Left cardiac atrium (tissue), 4 donors: ENCODE measurements at regions of chr11 and their contacts with region 1.

Region 1: DNA sequence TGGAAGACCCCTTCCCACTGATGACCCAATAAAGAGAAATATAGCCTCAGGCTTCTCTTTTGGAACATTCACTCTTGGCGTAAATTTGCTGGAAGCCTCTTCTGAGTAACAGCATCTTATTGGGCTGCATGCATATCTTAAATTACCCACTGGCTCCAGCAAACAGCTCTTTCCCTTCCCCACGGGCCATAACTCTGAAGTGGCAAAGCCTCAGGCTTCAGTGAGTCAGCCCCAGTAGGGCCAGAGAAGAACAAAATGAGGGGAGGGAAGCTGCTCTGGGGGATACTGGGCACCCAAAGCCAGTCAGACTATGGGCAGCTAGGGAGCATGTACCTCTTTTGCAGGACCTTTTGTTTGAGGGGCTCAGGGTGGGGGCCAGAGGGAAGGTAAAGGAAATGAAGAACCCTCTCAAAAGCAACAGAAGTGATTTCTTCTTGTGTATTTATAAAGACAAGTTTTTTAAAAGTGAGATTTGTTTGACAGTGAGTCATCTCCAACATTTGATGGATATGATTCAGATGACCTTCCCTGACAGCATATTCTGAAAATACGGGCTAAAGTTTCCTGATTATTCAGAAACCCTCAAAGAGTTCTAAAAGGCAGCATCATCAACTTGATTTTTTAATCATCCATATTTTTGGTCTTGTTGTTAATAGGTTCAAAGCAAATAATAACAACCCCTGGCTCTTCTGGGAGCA is 203.4 kb downstream of the KIF18A start:
- DNase-seq: no peak
- ATAC-seq: no peak

Region 2: GRCh38 chr11:27563201-27563600 is 341.3 kb before region 1 on chr11:
- intact Hi-C with region 1: no loop called
- DNase-seq: no peak
- ATAC-seq: no peak

Region 3: GRCh38 chr11:27977031-27977430 is 72.5 kb after region 1 on chr11:
- intact Hi-C with region 1: loop called in 1 of 2 experiments (anchors 10 kb)
- DNase-seq: no peak
- ATAC-seq: no peak